Posterior vena cava (tissue), 2 donors: ENCODE measurements at regions of chr1 and their contacts with region 1.

Region 1: GRCh38 chr1:174433451-174433850 is 14.3 kb upstream of the GPR52 start:
- DNase-seq: no peak

Region 2: DNA sequence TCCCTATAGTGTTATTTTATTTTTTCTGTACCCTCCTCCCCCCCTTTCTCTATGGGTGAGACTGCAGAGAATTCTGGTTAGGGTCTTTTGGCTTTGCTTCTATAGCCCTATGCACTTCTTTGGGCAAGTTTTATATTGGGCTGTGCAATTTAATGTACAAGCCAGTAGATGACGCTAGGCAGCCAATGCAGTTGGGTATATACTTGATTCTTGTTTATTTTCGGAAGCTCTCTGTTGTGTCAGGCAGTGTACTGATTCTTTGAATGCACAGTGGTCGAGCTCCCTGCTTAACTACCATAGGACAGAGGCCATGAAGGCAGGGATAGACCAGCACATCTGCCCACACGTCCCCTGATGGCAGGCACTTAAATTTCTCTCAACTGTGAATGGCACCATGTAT is 19.8 kb before region 1 on chr1:
- intact Hi-C with region 1: loop called in 1 of 2 experiments (anchors 1 kb)
- DNase-seq: no peak